Right cardiac atrium (tissue), 5 donors: ENCODE measurements at regions of chr13 and their contacts with region 1.

Region 1: DNA sequence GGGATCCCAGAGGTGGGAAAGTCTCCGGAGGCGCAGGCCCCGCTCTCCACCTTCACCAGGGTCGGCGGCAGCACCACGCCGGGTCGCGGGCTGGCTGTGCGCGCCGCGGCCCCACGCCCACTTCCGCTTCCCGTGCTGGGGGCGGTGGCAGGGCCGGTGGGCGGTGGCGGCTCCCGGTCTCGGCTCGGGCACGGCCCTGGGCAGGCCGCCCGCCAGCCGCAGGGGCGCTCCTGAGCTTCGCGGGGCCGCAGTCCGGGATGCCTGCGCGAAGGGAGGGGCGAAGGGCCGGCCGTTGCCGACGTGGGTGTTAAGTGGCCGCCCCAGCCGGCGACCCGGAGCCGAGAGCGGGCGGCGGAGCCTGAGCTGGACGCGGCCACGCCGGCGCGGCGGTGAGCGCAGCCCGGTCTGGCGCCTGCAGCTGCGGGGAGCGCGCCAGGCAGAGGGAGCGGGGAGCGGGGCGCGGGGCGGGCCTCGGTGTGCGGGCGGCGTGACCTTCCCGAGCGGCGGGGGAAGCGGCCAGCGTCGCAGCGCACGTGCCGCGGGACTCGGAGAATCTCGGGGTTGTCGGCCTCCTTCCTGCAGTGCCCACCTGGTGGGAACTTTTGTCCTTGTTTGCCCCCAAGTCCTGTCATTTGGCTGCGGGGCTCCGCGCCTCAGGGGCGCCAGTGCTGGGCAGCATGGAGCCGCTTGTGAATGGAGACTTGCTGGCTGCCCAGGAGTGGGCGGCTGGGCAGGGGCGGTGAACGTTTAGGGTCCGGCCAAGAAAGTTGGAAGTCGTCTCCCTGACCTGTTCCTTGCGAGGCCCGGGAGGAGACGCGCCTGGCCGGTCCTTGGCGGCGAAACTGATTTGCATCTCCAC is at the start of gene SLC25A15:
- DNase-seq: peak; percentile 90 to 95 (median 94)
- ATAC-seq: peak; percentile 96 to 97
- H3K4me3 ChIP-seq: peak within 1 kb of the TSS; percentile 66
- H3K27ac ChIP-seq: peak within 1 kb of the TSS; percentile 74
- H3K4me1 ChIP-seq: peaks cover 2% of the 10 kb centered on the region
- H3K27me3 ChIP-seq: no peaks in the 10 kb centered on the region
- total RNA-seq, gene SLC25A15: 3.4 to 5.7 (median 4.8) TPM

Region 2: GRCh38 chr13:41061075-41061913 is 271.8 kb after region 1 on chr13 and contains the start of gene WBP4:
- intact Hi-C with region 1: loop called in 1 of 4 experiments (anchors 10 kb)
- DNase-seq: peak; percentile 94 to 97 (median 96)
- ATAC-seq: peak; percentile 86 to 88
- H3K4me3 ChIP-seq: peak within 1 kb of the TSS; percentile 75
- H3K27ac ChIP-seq: peak within 1 kb of the TSS; percentile 100
- H3K4me1 ChIP-seq: peaks cover 6% of the 10 kb centered on the region
- H3K27me3 ChIP-seq: no peaks in the 10 kb centered on the region
- total RNA-seq, gene WBP4: 16.6 to 18.6 (median 16.9) TPM